Activated B cell treated with CpG ODN at 0.5 μM for 24 hours (primary cell): ENCODE measurements at regions of chr11 and their contacts with region 1.

Region 1: DNA sequence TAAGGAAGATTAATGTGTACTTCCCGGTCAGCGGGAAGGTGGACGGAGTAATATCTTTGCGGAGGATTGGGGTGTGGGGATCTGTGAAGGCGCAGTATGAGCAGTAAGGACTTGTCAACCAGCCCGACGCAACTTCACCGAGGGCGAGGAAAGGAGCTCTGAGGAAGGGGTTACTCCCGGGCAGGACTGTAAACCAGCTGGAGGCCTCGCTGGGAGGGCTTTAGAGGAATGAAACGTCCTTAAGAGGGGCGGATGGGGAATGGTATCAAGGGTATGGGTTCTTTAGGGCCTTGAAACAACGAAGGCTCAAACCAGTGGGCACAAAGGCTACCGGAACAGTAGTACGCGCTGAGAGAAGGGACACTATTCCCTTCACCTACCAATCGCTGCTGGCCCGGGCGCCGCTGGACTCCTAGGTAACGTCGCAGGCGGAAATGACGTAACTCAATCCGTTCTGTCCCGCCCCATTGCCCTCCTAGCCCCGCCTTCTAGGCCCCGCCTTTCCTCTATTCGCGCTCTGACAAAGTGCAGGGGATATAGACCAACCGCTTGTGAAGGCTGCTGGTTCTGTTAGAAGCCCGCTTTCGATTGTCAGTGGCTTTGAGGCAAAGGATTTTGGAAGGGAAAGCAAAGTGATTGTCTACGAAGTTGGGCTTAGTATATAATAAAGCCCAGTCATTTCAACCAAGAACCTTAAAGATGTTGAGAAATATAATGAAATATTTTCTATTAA is at the start of gene C11orf65:
- DNase-seq: peak; percentile 90
- ATAC-seq: peak; percentile 97
- H3K4me3 Mint-ChIP-seq: peak within 1 kb of the TSS; percentile 98
- H3K27ac Mint-ChIP-seq: peak within 1 kb of the TSS; percentile 99
- H3K4me1 Mint-ChIP-seq: peaks cover 18% of the 10 kb centered on the region
- H3K27me3 Mint-ChIP-seq: no peaks in the 10 kb centered on the region
- CTCF ChIP-seq: no peak
- total RNA-seq, gene C11orf65: 0.69 and 1.7 TPM in 2 replicates

Region 2: DNA sequence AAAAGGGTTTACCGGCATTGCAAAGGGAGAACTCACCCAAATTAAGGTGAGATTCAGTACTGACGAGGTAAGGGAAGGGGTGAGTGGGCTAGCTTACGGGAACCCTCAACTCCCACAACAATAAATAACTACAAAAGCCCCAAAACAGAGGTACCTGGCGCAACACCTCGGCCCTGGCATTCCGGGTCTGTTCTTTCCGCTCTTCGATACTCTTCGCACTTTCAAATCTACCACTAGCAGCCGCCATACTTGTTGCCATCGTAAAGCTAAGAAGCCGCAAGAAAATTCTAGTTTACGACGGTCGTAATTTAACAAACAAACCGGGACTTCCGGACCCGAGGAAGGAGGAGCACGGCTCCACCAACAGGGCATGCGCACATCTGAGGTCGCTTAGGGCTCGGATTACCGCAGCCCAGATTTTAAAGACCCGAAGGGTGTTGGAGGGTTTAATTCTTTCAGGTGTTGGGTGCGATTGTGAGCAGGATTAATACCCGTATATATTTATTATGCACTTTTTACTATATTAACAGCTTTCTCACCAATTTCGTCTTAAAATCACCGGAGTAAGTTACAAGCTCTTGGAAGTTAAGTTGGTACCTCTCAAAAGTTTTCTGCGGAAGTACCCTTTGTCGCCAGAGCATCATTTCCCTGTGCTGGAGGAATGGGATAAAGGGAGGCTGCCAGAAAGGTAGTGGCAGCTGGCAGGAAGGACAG is 1009.5 kb before region 1 on chr11 and contains the start of gene CWF19L2:
- CTCF ChIA-PET with region 1: no interaction called
- POLR2A ChIA-PET with region 1: no interaction called
- intact Hi-C with region 1: loop called (anchors 1 kb)
- DNase-seq: peak; percentile 67
- ATAC-seq: peak; percentile 96
- H3K4me3 Mint-ChIP-seq: peak within 1 kb of the TSS; percentile 90
- H3K27ac Mint-ChIP-seq: peak within 1 kb of the TSS; percentile 93
- H3K4me1 Mint-ChIP-seq: peaks cover 25% of the 10 kb centered on the region
- H3K27me3 Mint-ChIP-seq: peaks cover 3% of the 10 kb centered on the region
- CTCF ChIP-seq: no peak
- total RNA-seq, gene CWF19L2: 24.5 and 26.1 TPM in 2 replicates

Region 3: GRCh38 chr11:108008656-108009496 is 458.4 kb before region 1 on chr11 and contains the start of gene CUL5:
- CTCF ChIA-PET with region 1: no interaction called
- POLR2A ChIA-PET with region 1: no interaction called
- intact Hi-C with region 1: loop called (anchors 5 kb)
- DNase-seq: peak; percentile 89
- ATAC-seq: peak; percentile 87
- H3K4me3 Mint-ChIP-seq: peak within 1 kb of the TSS; percentile 99
- H3K27ac Mint-ChIP-seq: peak within 1 kb of the TSS; percentile 96
- H3K4me1 Mint-ChIP-seq: peaks cover 10% of the 10 kb centered on the region
- H3K27me3 Mint-ChIP-seq: no peaks in the 10 kb centered on the region
- CTCF ChIP-seq: no peak
- total RNA-seq, gene CUL5: 38.4 and 42.0 TPM in 2 replicates

Region 4: GRCh38 chr11:108160970-108161566 is 306.2 kb before region 1 on chr11:
- CTCF ChIA-PET with region 1: no interaction called
- POLR2A ChIA-PET with region 1: no interaction called
- intact Hi-C with region 1: loop called (anchors 2 kb)
- DNase-seq: no peak
- ATAC-seq: peak; percentile 100
- H3K4me3 Mint-ChIP-seq: no peak overlapping the region
- H3K27ac Mint-ChIP-seq: peak overlapping the region; percentile 87
- H3K4me1 Mint-ChIP-seq: peaks cover 13% of the 10 kb centered on the region
- H3K27me3 Mint-ChIP-seq: no peaks in the 10 kb centered on the region
- CTCF ChIP-seq: no peak

Region 5: DNA sequence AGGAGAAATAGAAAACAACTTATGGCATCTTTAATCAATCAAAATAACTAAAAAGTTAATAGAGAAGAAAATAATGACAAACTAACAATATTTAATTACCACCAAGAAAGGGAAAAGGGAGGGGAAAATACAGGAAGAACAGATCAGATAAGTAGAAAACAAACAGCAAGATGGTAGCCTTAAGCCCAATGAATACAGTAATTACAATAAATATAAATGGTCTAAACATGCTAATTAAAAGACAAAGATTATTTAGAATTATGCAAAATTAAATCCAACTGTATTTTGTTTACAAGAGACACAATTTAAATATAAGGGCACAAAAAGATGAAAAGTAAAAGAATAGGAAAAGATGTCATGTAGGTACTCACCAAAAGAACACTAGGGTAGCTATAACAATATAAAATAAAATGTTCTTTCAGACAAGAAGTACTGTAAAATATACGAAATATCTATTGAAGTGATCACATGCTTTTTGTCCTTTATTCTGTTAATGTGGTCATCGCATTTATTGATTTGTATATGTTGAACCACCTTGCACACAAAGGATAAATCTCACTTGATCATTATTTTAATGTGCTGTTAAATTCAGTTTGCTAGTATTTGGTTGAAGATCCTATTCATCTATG is 13.9 kb before region 1 on chr11:
- CTCF ChIA-PET with region 1: no interaction called
- POLR2A ChIA-PET with region 1: no interaction called
- intact Hi-C with region 1: no loop called
- DNase-seq: no peak
- ATAC-seq: no peak
- H3K4me3 Mint-ChIP-seq: no peak overlapping the region
- H3K27ac Mint-ChIP-seq: no peak overlapping the region
- H3K4me1 Mint-ChIP-seq: no peaks in the 10 kb centered on the region
- H3K27me3 Mint-ChIP-seq: no peaks in the 10 kb centered on the region
- CTCF ChIP-seq: no peak

Region 6: GRCh38 chr11:108497317-108498045 is 30.2 kb after region 1 on chr11:
- CTCF ChIA-PET with region 1: no interaction called
- POLR2A ChIA-PET with region 1: interaction called, 6 read pairs
- intact Hi-C with region 1: loop called (anchors 1 kb)
- DNase-seq: peak; percentile 51
- ATAC-seq: peak; percentile 71
- H3K4me3 Mint-ChIP-seq: peak overlapping the region; percentile 100
- H3K27ac Mint-ChIP-seq: peak overlapping the region; percentile 97
- H3K4me1 Mint-ChIP-seq: peaks cover 15% of the 10 kb centered on the region
- H3K27me3 Mint-ChIP-seq: no peaks in the 10 kb centered on the region
- CTCF ChIP-seq: no peak

Region 7: DNA sequence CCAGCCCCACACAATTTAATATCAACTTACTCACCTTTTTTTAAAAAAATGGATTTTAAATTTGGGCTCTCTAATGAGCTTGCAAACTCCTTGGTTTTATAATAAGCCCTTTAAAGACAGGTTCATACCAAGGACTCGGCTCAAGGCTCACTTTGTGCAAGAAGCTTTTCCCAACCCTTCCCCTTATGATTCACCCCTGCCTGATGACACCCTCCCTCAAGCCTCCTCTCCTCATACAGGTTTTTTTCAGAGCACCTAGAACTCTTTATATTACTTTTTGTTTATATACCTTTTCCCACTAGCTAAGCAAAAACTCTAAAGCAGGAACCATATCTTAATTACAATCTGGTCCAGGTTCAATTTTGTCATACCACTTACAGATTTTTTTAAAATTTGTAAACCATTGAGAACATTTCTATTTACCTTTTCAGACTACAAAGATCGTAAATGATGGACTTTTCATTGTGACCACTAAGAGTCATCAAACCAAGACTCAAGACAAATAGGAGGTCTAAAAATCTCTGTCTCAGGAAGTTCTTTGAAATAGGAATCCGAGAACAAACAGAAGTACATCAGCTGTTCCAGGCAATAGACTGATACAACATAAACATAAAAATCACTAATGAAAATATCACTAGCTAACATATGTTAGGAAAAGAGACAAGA is 139.4 kb after region 1 on chr11:
- CTCF ChIA-PET with region 1: no interaction called
- POLR2A ChIA-PET with region 1: no interaction called
- intact Hi-C with region 1: no loop called
- DNase-seq: no peak
- ATAC-seq: no peak
- H3K4me3 Mint-ChIP-seq: no peak overlapping the region
- H3K27ac Mint-ChIP-seq: no peak overlapping the region
- H3K4me1 Mint-ChIP-seq: no peaks in the 10 kb centered on the region
- H3K27me3 Mint-ChIP-seq: peaks cover 27% of the 10 kb centered on the region
- CTCF ChIP-seq: no peak

Region 8: GRCh38 chr11:108664730-108665525 is 197.7 kb after region 1 on chr11 and contains the start of gene DDX10:
- CTCF ChIA-PET with region 1: no interaction called
- POLR2A ChIA-PET with region 1: interaction called, 8 read pairs
- intact Hi-C with region 1: loop called (anchors 1 kb)
- DNase-seq: peak; percentile 95
- ATAC-seq: peak; percentile 100
- H3K4me3 Mint-ChIP-seq: peak within 1 kb of the TSS; percentile 100
- H3K27ac Mint-ChIP-seq: peak within 1 kb of the TSS; percentile 96
- H3K4me1 Mint-ChIP-seq: peaks cover 46% of the 10 kb centered on the region
- H3K27me3 Mint-ChIP-seq: no peaks in the 10 kb centered on the region
- CTCF ChIP-seq: no peak
- total RNA-seq, gene DDX10: 37.7 and 43.3 TPM in 2 replicates